Posterior vena cava (tissue), 2 donors: ENCODE measurements at regions of chr7 and their contacts with region 1.

Region 1: DNA sequence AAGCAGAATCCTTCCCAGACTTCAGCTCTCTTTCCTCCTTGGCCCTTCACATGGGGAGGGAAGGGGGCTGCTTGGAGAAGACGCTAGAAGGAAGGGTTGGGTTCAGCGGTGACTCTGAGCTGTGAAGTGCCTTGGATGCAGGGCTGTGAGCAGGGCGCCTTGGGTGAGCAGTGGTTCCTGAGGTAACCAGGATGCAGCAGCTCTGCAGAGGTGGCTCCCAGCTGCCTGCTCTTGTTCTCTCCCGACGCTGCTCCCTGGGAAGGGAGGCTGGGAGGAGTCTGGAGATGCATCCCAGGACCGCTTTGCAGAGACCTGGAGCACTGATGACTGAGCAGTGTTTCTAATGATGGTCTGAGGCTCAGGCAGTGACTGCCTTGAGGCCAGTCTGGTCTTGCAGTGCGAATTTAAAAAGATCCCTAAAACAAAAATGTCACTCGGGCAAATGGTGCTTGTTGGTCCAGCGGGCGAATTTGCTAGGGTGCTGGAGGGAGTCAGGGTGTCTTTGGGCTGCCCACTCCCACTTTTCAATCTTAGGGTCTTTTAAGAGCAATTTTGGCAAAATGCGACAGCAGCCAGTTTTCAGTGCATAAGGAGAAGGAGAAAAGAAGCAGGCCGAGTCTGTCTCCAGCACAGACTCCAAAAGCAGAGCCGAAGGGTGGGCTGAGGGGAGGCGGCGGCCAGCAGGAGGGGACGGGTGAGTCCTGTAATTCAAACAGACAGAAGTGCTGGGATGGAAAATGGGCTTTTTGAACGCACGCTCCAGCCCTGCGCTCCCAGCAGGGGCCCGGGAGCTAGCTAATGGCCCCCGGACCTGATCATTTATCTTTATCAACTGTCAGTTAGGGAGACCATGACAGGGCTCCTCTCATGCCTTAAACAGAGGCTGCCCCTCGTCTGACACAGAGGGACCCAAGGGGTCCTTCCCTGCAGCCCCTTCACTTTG is 191.2 kb upstream of the SHH start:
- DNase-seq: no peak

Region 2: GRCh38 chr7:155555116-155555695 is 448.3 kb before region 1 on chr7:
- intact Hi-C with region 1: no loop called
- DNase-seq: no peak

Region 3: GRCh38 chr7:155889636-155890498 is 113.6 kb before region 1 on chr7:
- intact Hi-C with region 1: loop called in 1 of 2 experiments (anchors 1 kb)
- DNase-seq: no peak

Region 4: GRCh38 chr7:156064971-156065386 is 61.5 kb after region 1 on chr7:
- intact Hi-C with region 1: no loop called
- DNase-seq: no peak